Activated CD4-positive, alpha-beta memory T cell treated with anti-CD3 and anti-CD28 coated beads, Interleukin-2, amount 10 ng/mL, durations not matched to agents 7 days and 5 days (primary cell): ENCODE measurements at regions of chr9 and their contacts with region 1.

Region 1: DNA sequence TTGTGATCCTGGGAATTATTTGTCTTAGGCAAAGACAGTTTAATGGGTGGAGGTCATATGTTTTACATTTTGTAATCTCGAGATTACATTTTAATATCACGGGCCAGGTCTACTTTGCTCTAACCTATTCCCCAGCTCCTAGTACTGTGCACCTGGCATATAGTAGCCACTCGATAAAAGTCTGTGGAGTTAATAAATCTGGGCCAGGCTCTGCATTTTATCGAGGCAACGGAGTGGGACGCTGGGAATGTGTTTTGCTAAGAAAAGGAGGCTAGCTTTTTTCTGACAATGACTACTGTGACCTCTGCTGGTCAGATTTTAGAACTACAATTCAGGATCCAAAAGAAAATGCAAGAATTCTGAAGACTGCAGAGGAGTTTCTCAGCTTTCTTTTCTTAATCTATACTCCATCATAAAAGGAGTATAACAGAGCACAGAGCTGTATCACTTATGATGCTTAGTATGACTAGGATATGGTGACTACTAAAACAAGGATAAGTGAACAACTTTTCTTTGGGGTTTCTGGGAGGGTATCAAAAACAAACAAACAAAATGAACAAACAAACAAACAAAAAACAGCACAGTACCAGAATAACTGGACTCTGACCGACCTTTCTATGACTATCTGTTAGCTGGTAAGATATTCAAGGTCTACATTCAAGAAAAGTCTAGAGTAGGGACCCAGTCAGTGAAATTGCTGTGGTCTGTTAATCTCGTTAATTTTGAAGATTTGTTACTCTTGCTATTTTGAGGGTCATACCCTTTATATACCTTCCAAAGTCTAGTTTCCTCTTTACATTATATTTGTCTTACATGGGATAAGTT is 46.1 kb upstream of the CER1 start:
- DNase-seq: no peak
- H3K4me3 Mint-ChIP-seq: no peak overlapping the region
- H3K27ac Mint-ChIP-seq: no peak overlapping the region
- H3K4me1 Mint-ChIP-seq: no peaks in the 10 kb centered on the region
- H3K27me3 Mint-ChIP-seq: peaks cover 16% of the 10 kb centered on the region

Region 2: GRCh38 chr9:14616188-14616982 is 152.2 kb before region 1 on chr9:
- CTCF ChIA-PET with region 1: interaction called, 19 read pairs
- POLR2A ChIA-PET with region 1: no interaction called
- DNase-seq: no peak
- H3K4me3 Mint-ChIP-seq: no peak overlapping the region
- H3K27ac Mint-ChIP-seq: no peak overlapping the region
- H3K4me1 Mint-ChIP-seq: no peaks in the 10 kb centered on the region
- H3K27me3 Mint-ChIP-seq: no peaks in the 10 kb centered on the region

Region 3: DNA sequence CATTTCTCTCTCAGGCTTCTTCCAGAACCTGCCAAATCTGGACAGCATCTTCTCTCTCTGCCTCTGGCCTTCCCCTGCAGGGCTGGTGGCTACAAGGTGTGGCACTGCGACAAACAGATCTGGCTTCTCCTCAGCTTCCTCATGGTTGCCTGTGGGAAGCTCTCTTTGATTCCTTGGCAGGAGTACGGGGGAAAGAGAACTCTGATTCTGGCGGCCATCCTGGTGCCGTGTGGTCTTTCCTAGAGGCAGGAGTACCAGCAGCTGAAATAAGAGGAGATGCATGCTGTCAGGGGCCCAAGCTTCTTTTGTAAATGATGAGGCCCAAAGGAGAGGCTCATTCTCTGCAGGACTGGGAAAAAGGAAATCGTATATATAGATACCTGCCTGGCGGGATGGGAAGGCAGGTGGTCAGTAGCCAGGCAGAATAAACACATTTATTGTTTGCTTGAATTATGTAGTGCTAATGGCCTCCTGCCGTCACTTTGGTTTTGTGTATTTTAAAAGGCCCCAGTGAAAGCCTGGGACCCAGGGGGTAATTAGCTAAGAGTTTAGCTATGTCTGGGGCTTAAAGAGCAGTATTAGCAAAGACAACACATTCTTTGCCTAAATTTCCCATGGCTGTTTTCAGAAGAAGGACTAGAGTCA is 46.1 kb before region 1 on chr9 and contains the start of gene CER1:
- CTCF ChIA-PET with region 1: no interaction called
- POLR2A ChIA-PET with region 1: no interaction called
- DNase-seq: no peak
- H3K4me3 Mint-ChIP-seq: no peak within 1 kb of the TSS
- H3K27ac Mint-ChIP-seq: no peak within 1 kb of the TSS
- H3K4me1 Mint-ChIP-seq: no peaks in the 10 kb centered on the region
- H3K27me3 Mint-ChIP-seq: peaks cover 24% of the 10 kb centered on the region
- total RNA-seq, gene CER1: not detected